RWPE1 (cell line): ENCODE measurements at regions of chr3 and their contacts with region 1.

Region 1: DNA sequence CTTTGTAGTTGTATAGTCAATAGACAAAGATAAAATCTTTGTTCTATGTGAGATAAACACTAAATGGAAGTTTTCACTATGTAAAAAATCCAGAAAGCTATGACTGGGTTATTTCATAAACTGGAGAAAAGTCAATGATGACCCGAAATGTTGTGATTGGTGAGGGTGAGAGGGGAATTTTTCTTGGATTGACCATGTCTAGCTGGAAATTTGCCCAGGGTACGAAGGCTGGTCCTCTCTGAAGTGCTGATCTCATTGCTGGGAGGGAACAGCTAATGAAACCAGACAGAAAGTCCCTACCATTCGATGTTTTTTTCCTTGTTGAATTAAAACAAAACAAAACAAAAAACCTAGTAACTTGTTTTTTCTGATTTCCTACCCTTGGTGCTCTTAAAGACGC is 14.3 kb downstream of the TPRG1 start:
- DNase-seq: no peak
- H3K27ac ChIP-seq: no peak overlapping the region
- CTCF ChIP-seq: no peak

Region 2: GRCh38 chr3:189041482-189042090 is 144.5 kb before region 1 on chr3:
- CTCF ChIA-PET with region 1: no interaction called
- POLR2A ChIA-PET with region 1: interaction called, 11 read pairs
- DNase-seq: peak; percentile 31
- H3K27ac ChIP-seq: no peak overlapping the region
- CTCF ChIP-seq: peak; percentile 31

Region 3: DNA sequence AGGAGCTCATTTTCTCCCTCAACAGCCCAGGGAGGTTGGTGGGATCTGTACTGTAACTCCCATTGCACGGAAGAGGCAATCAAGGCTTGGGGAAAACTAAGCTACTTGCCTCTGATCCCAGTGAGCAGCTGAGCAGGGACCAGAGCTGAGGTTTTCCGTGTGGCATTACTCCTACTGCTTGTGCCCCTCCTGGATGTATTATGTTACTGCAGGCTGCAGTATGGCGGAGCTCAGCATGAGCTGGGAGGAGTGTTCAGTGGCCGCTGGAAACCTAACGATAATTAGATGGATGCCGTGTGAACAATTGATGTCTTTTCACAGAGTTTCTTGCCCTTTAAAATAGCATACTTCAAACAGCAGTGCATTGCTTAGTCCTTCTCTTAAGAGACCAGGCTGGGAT is 16.4 kb before region 1 on chr3:
- CTCF ChIA-PET with region 1: no interaction called
- POLR2A ChIA-PET with region 1: no interaction called
- DNase-seq: no peak
- H3K27ac ChIP-seq: no peak overlapping the region
- CTCF ChIP-seq: no peak